Activated CD8-positive, alpha-beta T cell treated with anti-CD3 and anti-CD28 coated beads for 36 hours (primary cell): ENCODE measurements at regions of chr13 and their contacts with region 1.

Region 1: DNA sequence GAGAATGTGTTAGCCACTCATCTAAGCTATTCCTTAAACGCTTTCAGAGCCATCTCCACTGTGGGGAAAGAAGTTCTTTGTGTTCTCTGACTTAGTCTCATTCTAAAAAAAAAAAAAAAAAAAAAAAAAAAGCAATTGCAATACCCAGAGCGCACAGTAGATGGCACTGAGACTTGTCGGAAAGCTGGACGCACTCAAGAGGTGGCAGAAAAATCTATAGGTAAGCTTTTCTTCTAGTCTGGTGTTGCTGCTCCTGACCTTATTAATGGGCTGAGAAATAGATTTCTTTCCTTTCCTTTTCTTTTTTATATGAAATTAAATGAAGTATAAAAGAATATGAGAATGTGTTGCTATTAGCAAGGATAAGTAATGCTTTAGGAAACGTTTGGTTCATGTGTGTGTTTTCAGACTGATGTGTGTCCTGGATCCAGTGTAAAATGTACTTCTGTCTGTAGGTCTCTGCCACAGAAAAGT is 4.7 kb upstream of the GJB2 start:
- DNase-seq: peak; percentile 28
- ATAC-seq: peak; percentile 60
- H3K4me3 Mint-ChIP-seq: no peak overlapping the region
- H3K27ac Mint-ChIP-seq: no peak overlapping the region
- H3K4me1 Mint-ChIP-seq: peaks cover 19% of the 10 kb centered on the region
- H3K27me3 Mint-ChIP-seq: peaks cover 36% of the 10 kb centered on the region
- CTCF ChIP-seq: peak; percentile 91

Region 2: GRCh38 chr13:20182231-20182846 is 15.1 kb before region 1 on chr13:
- CTCF ChIA-PET with region 1: interaction called, 36 read pairs
- POLR2A ChIA-PET with region 1: no interaction called
- intact Hi-C with region 1: no loop called
- DNase-seq: peak; percentile 58
- ATAC-seq: peak; percentile 100
- H3K4me3 Mint-ChIP-seq: no peak overlapping the region
- H3K27ac Mint-ChIP-seq: no peak overlapping the region
- H3K4me1 Mint-ChIP-seq: no peaks in the 10 kb centered on the region
- H3K27me3 Mint-ChIP-seq: peaks cover 34% of the 10 kb centered on the region
- CTCF ChIP-seq: peak; percentile 86

Region 3: DNA sequence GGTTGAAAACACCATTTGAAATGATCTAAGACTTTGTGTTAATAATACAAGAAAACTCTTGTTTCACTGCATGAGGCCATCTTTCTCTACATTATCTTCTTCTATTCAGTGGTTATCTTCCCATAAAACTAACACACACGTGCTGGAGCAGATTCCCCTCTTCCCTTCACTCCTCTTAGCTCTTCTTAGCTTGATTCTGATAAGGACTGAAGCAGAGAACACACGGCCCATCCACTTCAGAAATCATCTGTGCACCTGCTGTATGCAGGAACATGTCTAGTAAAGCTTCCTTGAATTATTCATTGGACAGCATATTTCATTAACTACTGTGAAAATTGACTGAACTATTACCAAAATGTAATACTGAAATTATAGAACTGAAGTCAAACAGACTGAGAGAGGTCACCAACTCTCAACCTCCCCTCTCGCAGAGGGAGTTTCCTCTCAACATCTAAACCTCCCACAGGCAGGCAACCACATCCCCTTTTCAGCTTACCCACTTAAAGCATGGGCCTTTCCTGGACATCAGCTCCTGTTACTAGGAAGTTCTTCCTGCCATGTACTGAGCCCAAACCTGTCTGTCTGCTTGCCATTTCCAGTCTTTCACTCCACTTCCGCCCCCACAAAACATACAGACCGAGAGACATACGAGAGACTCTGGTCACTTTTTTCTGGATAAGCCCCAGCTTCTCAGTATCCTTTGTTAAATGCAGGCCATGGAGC is 214.4 kb after region 1 on chr13:
- CTCF ChIA-PET with region 1: interaction called, 6 read pairs
- POLR2A ChIA-PET with region 1: no interaction called
- intact Hi-C with region 1: loop called (anchors 10 kb)
- DNase-seq: peak; percentile 82
- ATAC-seq: peak; percentile 89
- H3K4me3 Mint-ChIP-seq: peak overlapping the region; percentile 26
- H3K27ac Mint-ChIP-seq: peak overlapping the region; percentile 88
- H3K4me1 Mint-ChIP-seq: peaks cover 24% of the 10 kb centered on the region
- H3K27me3 Mint-ChIP-seq: no peaks in the 10 kb centered on the region
- CTCF ChIP-seq: no peak

Region 4: GRCh38 chr13:20495082-20496023 is 298.0 kb after region 1 on chr13:
- CTCF ChIA-PET with region 1: interaction called, 22 read pairs
- POLR2A ChIA-PET with region 1: no interaction called
- intact Hi-C with region 1: no loop called
- DNase-seq: peak; percentile 79
- ATAC-seq: peak; percentile 89
- H3K4me3 Mint-ChIP-seq: no peak overlapping the region
- H3K27ac Mint-ChIP-seq: no peak overlapping the region
- H3K4me1 Mint-ChIP-seq: peaks cover 2% of the 10 kb centered on the region
- H3K27me3 Mint-ChIP-seq: no peaks in the 10 kb centered on the region
- CTCF ChIP-seq: peak; percentile 96